Esophagus muscularis mucosa (tissue), 4 donors: ENCODE measurements at regions of chr1 and their contacts with region 1.

Region 1: DNA sequence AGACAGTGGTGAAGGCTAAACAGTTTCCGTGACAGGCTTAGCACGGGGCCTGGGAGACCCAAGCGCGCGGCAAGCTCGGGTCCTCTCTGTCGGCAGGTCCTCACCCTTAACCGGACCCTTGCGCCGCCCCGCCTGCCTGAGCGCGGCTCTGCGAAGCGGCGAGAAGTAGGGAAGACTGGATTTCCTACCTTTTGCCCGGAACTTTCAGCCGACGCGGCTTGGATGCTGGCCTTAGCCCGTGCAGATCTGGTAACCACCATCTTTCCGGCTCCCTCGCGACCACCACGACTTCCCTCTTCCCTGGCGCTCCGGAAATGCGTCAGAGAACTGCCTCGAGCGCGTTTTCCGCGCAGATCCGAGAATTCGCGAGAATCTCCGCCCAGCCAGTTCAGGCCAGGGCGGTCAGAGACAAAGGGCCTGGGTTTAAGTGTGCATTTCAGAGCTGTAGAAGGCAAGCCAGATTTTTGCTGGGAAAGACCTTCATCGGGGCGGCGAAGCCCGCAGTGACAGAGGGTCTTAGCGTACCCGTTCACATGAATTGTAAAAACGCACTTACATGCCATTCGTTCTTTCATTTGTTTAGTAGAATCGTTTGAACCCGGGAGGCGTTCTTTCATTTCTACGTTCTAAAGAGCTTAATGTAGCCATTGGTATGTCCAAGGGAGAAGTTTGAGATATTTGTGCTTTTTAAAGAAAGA is at the start of gene DNTTIP2:
- DNase-seq: peak; percentile 97
- H3K4me3 ChIP-seq: peak within 1 kb of the TSS; percentile 84 to 98 (median 92)
- H3K27ac ChIP-seq: peak within 1 kb of the TSS; percentile 86 to 94 (median 92)
- H3K4me1 ChIP-seq: peaks cover 22 to 37% (median 34%) of the 10 kb centered on the region in 4 donors
- H3K27me3 ChIP-seq: no peaks in the 10 kb centered on the region
- CTCF ChIP-seq: peak in 1 of 3 experiments; percentile 8
- EP300 ChIP-seq: no peak
- POLR2A ChIP-seq: peak; percentile 68
- total RNA-seq, gene DNTTIP2: 23.3 to 43.4 (median 31.4) TPM

Region 2: GRCh38 chr1:93909146-93910050 is 30.4 kb after region 1 on chr1 and contains the start of gene GCLM:
- intact Hi-C with region 1: loop called (anchors 2 kb)
- DNase-seq: peak; percentile 96
- H3K4me3 ChIP-seq: peak within 1 kb of the TSS; percentile 93 to 98 (median 96)
- H3K27ac ChIP-seq: peak within 1 kb of the TSS; percentile 81 to 92 (median 86)
- H3K4me1 ChIP-seq: peaks cover 13 to 29% (median 23%) of the 10 kb centered on the region in 4 donors
- H3K27me3 ChIP-seq: no peaks in the 10 kb centered on the region
- CTCF ChIP-seq: peak; percentile 86 to 92 (median 92)
- EP300 ChIP-seq: no peak
- POLR2A ChIP-seq: no peak
- total RNA-seq, gene GCLM: 4.2 to 18.4 (median 6.3) TPM